ENCODE measurements at regions of chr12 and their contacts with region 1.

Region 1: GRCh38 chr12:14769969-14770495 is 33.2 kb downstream of the WBP11 start:
- DNase-seq: peak; percentile 91
- ATAC-seq: peak; percentile 56
- H3K4me3 Mint-ChIP-seq: peak overlapping the region; percentile 98
- H3K27ac Mint-ChIP-seq: peak overlapping the region; percentile 99
- H3K4me1 Mint-ChIP-seq: peaks cover 61% of the 10 kb centered on the region
- H3K27me3 Mint-ChIP-seq: no peaks in the 10 kb centered on the region
- CTCF ChIP-seq: no peak

Region 2: DNA sequence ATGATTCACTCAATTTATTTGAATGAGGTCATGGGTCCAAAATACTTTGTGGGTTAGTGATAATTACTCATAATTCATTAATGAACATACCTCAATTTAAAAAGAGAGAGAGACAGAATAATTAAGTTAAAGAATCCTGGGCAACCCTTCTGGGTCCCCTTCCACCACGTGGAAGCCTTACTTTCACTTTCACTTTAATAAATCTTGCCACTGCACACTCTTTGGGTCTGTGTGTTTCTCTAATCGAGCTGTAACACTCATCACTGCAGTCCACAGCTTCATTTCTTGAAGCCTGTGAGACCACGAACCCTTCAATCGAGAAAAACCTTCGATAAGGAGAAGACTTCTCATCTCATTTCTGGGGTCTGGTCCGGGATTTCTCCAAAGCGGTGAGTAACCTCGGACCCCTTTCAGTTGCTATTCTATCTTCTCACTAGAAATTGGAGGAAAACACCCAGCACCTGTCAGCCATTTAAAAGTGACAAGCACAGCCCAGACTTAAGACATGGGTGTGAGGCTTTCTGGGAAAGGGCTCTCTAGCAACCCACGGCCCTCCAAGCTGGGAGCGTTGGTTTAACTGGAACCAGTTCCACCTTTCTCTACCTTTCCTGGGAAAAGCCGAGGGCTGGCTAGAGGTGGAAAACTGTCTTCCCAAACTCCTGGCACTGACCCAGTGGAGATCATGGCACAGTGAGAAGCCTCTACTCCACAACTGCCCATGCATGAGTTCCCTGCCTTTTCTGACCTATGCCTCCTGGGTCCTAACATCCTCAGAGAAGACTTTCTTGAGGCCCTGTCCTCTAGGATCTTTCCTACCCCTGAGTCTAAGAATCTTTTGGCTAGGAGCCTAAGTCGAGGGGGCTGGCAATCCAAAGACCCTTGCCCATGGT is 553.4 kb before region 1 on chr12:
- CTCF ChIA-PET with region 1: no interaction called
- POLR2A ChIA-PET with region 1: interaction called, 12 read pairs
- intact Hi-C with region 1: loop called (anchors 2 kb)
- DNase-seq: no peak
- ATAC-seq: peak; percentile 62
- H3K4me3 Mint-ChIP-seq: peak overlapping the region; percentile 70
- H3K27ac Mint-ChIP-seq: peak overlapping the region; percentile 82
- H3K4me1 Mint-ChIP-seq: peaks cover 34% of the 10 kb centered on the region
- H3K27me3 Mint-ChIP-seq: no peaks in the 10 kb centered on the region
- CTCF ChIP-seq: no peak

Region 3: DNA sequence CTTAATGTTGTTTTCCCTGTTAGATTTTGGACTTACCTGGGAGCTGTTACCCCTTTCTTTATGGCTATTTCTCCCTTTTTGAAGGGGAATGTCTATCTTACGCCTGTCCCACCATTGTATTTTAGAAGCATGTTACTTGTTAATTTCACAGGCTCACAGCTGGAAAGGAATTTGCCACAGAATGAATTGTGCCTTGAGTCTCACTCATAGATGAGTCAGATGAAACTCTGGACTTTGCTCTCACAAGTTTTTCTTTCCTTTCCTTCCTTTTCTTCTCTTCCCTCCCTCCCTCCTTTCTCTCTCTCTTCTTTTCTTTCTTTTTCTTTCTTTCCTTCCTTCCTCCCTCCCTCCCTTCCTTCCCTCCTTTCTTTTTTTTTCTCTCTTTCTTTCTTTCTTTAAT is 413.9 kb before region 1 on chr12:
- CTCF ChIA-PET with region 1: no interaction called
- POLR2A ChIA-PET with region 1: no interaction called
- intact Hi-C with region 1: no loop called
- DNase-seq: no peak
- ATAC-seq: no peak
- H3K4me3 Mint-ChIP-seq: no peak overlapping the region
- H3K27ac Mint-ChIP-seq: no peak overlapping the region
- H3K4me1 Mint-ChIP-seq: peaks cover 10% of the 10 kb centered on the region
- H3K27me3 Mint-ChIP-seq: no peaks in the 10 kb centered on the region
- CTCF ChIP-seq: no peak

Region 4: DNA sequence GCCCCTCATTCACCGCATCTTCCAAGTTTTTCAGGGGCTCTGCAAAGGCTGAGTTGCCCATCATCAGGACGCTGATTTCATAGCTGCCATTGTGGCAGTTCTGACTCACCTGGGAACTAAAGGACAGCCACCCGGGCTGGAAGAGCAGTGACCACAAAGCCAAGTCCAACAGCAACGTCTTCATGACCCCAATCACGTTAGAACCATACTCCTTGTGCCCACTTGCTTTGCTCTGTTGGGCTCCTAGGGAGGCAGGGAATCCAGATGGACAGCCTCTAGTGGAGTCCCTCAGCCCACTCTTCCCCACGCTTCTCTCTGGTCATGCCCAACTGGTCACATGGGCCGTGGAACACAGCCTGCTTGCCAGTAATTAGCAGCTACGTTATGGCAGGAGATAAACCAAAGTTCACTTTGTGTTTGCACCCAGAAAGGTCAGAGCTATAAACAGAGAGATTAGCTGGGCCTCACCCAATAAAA is 73.7 kb before region 1 on chr12 and contains the start of gene GUCY2C:
- CTCF ChIA-PET with region 1: no interaction called
- POLR2A ChIA-PET with region 1: no interaction called
- intact Hi-C with region 1: no loop called
- DNase-seq: no peak
- ATAC-seq: no peak
- H3K4me3 Mint-ChIP-seq: no peak within 1 kb of the TSS
- H3K27ac Mint-ChIP-seq: no peak within 1 kb of the TSS
- H3K4me1 Mint-ChIP-seq: no peaks in the 10 kb centered on the region
- H3K27me3 Mint-ChIP-seq: peaks cover 22% of the 10 kb centered on the region
- CTCF ChIP-seq: no peak
- total RNA-seq, gene GUCY2C: 0.22 and 0.32 TPM in 2 replicates

Region 5: GRCh38 chr12:14723763-14724162 is 46.3 kb before region 1 on chr12:
- CTCF ChIA-PET with region 1: interaction called, 3 read pairs
- POLR2A ChIA-PET with region 1: interaction called, 5 read pairs
- intact Hi-C with region 1: loop called (anchors 1 kb)
- DNase-seq: no peak
- ATAC-seq: peak; percentile 76
- H3K4me3 Mint-ChIP-seq: no peak overlapping the region
- H3K27ac Mint-ChIP-seq: no peak overlapping the region
- H3K4me1 Mint-ChIP-seq: no peaks in the 10 kb centered on the region
- H3K27me3 Mint-ChIP-seq: peaks cover 11% of the 10 kb centered on the region
- CTCF ChIP-seq: peak; percentile 25

Region 6: DNA sequence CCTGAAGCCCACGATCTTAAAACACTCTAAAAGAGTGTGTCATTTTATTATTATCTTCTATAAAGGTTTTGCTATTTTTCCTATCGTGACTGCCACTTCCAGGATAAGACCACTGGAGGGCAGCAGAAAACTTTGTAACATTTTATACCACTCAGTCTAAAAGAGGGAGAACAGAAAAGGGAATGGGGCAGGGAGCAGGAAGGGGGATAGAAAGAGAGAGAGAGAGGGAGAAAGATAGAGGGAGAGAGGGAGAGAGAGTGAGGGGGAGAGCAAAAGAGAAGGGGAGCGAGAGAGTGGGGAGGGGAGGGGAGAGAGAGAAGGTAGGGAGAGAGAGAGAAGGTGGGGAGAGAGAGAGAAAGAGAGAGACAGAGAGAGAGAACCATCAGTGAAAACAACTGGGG is 75.3 kb after region 1 on chr12:
- CTCF ChIA-PET with region 1: no interaction called
- POLR2A ChIA-PET with region 1: no interaction called
- intact Hi-C with region 1: loop called (anchors 2 kb)
- DNase-seq: no peak
- ATAC-seq: peak; percentile 81
- H3K4me3 Mint-ChIP-seq: no peak overlapping the region
- H3K27ac Mint-ChIP-seq: peak overlapping the region; percentile 51
- H3K4me1 Mint-ChIP-seq: peaks cover 14% of the 10 kb centered on the region
- H3K27me3 Mint-ChIP-seq: no peaks in the 10 kb centered on the region
- CTCF ChIP-seq: peak; percentile 87

Region 7: GRCh38 chr12:14960548-14961465 is 190.8 kb after region 1 on chr12:
- CTCF ChIA-PET with region 1: no interaction called
- POLR2A ChIA-PET with region 1: interaction called, 98 read pairs
- intact Hi-C with region 1: loop called (anchors 1 kb)
- DNase-seq: peak; percentile 41
- ATAC-seq: peak; percentile 59
- H3K4me3 Mint-ChIP-seq: peak overlapping the region; percentile 96
- H3K27ac Mint-ChIP-seq: peak overlapping the region; percentile 98
- H3K4me1 Mint-ChIP-seq: peaks cover 78% of the 10 kb centered on the region
- H3K27me3 Mint-ChIP-seq: no peaks in the 10 kb centered on the region
- CTCF ChIP-seq: no peak

Region 8: GRCh38 chr12:15789220-15790171 is 1019.5 kb after region 1 on chr12 and contains the start of gene EPS8:
- CTCF ChIA-PET with region 1: no interaction called
- POLR2A ChIA-PET with region 1: no interaction called
- intact Hi-C with region 1: loop called (anchors 5 kb)
- DNase-seq: peak; percentile 91
- ATAC-seq: peak; percentile 96
- H3K4me3 Mint-ChIP-seq: peak within 1 kb of the TSS; percentile 91
- H3K27ac Mint-ChIP-seq: peak within 1 kb of the TSS; percentile 46
- H3K4me1 Mint-ChIP-seq: peaks cover 14% of the 10 kb centered on the region
- H3K27me3 Mint-ChIP-seq: peaks cover 47% of the 10 kb centered on the region
- CTCF ChIP-seq: no peak
- total RNA-seq, gene EPS8: 0.73 and 0.89 TPM in 2 replicates

Measured in activated B cell treated with CpG ODN at 0.5 μM for 24 hours (primary cell).